Dorsolateral prefrontal cortex (tissue), 120 donors: ENCODE measurements at regions of chr17 and their contacts with region 1.

Region 1: GRCh38 chr17:57987580-57988421 is at the start of gene VEZF1:
- DNase-seq: peak; percentile 51 to 82 (median 68)
- H3K4me3 ChIP-seq: peak within 1 kb of the TSS; percentile 61 to 98 (median 87)
- H3K27ac ChIP-seq: peak within 1 kb of the TSS; percentile 86 to 100 (median 98)
- H3K27me3 ChIP-seq: no peaks in the 10 kb centered on the region
- CTCF ChIP-seq: peak in 9 of 56 donors; percentile 5 to 20 (median 11)
- total RNA-seq, gene VEZF1: 29.6 to 117 (median 50.6) TPM

Region 2: DNA sequence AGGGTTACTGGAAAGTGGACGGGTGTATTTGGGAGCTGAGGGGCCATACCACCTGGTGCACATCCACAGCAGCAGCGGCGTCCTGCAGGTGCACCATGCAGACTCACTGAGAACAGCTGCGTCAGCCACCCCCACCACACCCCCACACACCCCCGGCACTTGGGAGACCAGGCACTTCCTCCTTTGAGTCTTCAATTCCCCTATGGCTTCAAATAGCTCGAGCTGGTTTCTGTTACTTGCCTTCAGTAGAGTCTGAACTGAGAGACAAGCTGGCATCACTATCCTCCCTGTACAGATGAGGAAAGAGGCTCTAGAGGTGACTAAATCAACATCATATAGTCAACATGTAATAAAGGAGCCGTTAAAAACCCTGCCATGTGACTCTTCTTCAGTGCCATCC is 48.0 kb before region 1 on chr17:
- intact Hi-C with region 1: loop called in 1 of 2 experiments (anchors 5 kb)
- DNase-seq: no peak
- H3K4me3 ChIP-seq: no peak overlapping the region
- H3K27ac ChIP-seq: peak overlapping the region; percentile 58 to 100 (median 99)
- H3K27me3 ChIP-seq: no peaks in the 10 kb centered on the region
- CTCF ChIP-seq: no peak

Region 3: GRCh38 chr17:57954395-57955182 is 33.2 kb before region 1 on chr17:
- intact Hi-C with region 1: loop called in 1 of 2 experiments (anchors 5 kb)
- DNase-seq: peak in 8 of 10 donors; percentile 31 to 82 (median 64)
- H3K4me3 ChIP-seq: peak overlapping the region; percentile 64 to 96 (median 83)
- H3K27ac ChIP-seq: peak overlapping the region; percentile 82 to 100 (median 99)
- H3K27me3 ChIP-seq: no peaks in the 10 kb centered on the region
- CTCF ChIP-seq: peak in 8 of 56 donors; percentile 10 to 30 (median 15)

Region 4: DNA sequence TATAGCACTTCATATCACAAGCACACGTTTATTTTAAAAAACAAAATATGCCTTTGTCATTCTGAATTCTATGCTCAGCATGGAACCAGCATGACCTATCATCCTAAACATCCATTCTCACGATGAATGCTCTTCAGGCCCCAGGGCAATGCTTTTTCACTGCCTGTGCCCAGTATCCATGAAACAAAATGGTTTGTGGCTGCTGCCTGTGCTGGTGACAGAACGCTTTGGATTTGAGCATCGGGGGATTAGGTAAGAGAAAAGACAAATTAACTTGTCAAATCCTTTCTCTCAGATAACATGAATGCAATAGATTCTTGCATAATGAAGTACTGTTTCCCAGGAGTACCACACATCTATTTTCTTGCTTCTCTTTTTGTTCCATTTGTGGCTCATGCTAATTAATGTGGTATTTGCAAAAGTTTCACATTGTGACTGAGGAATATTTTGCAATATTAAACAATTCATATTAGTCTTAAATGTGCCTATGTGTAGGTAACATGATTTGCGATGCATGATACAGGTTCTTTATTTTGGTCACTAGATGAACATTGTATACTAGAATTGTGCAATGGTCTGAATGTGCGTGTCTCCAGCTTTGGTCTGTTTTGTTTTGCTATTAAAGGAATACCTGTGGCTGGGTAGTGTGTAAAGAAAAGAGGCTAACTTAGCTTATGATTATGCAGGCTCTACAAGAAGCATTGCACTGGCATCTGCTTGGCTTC is 45.1 kb after region 1 on chr17:
- intact Hi-C with region 1: no loop called
- DNase-seq: no peak
- H3K4me3 ChIP-seq: no peak overlapping the region
- H3K27ac ChIP-seq: no peak overlapping the region
- H3K27me3 ChIP-seq: no peaks in the 10 kb centered on the region
- CTCF ChIP-seq: no peak